Mammary epithelial cell (primary cell): ENCODE measurements at regions of chr5 and their contacts with region 1.

Region 1: DNA sequence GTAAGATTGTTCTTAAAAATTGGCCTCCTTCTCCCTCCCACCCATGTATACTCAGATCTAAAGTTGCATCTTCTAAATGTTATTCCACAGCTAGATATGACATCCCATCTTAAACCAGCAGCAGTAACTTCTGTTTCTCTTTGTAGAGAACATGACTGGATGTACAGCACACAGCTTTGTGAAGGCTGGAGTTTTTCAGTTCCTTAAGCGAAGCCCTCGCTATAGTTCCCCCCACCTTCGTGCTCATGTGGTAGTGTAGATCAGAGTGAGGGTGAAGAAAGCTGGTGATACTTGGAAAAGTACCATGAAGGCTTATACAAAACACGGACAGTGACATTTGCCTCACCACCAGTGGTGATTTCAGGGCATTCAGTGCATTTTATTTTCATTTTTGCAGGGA is 137.5 kb downstream of the MAT2B start:
- DNase-seq: no peak
- H3K4me3 ChIP-seq: no peak overlapping the region
- H3K27ac ChIP-seq: no peak overlapping the region
- H3K4me1 ChIP-seq: peaks cover 13% of the 10 kb centered on the region
- H3K27me3 ChIP-seq: no peaks in the 10 kb centered on the region
- CTCF ChIP-seq: no peak

Region 2: GRCh38 chr5:163712011-163712410 is 69.1 kb after region 1 on chr5:
- CTCF ChIA-PET with region 1: no interaction called
- dilution Hi-C with region 1: loop called (anchors 5 kb)
- in situ Hi-C with region 1: no loop called
- intact Hi-C with region 1: no loop called
- DNase-seq: no peak
- H3K4me3 ChIP-seq: no peak overlapping the region
- H3K27ac ChIP-seq: no peak overlapping the region
- H3K4me1 ChIP-seq: no peaks in the 10 kb centered on the region
- H3K27me3 ChIP-seq: no peaks in the 10 kb centered on the region
- CTCF ChIP-seq: no peak

Region 3: DNA sequence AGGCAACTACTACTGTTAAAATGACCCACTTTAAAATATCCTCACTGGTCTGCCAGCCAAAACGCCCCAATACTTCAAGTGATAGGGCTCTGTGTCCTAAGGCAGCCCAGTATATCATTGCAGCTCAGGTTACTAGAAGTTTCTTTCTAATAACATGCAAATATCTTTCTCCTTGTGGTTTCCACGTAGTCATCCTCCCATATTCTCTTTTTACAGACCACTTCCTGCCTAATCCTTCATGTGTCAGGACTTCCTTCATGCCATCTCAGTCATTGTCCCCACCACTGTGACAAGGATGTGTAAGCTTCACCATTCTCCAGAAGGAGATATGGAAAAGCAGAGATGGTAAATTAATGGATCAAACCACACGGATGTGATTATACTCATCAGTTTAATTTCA is 676.3 kb after region 1 on chr5:
- CTCF ChIA-PET with region 1: no interaction called
- dilution Hi-C with region 1: no loop called
- in situ Hi-C with region 1: no loop called
- intact Hi-C with region 1: no loop called
- DNase-seq: no peak
- H3K4me3 ChIP-seq: no peak overlapping the region
- H3K27ac ChIP-seq: no peak overlapping the region
- H3K4me1 ChIP-seq: no peaks in the 10 kb centered on the region
- H3K27me3 ChIP-seq: no peaks in the 10 kb centered on the region
- CTCF ChIP-seq: no peak